ENCODE measurements at regions of chr21 and their contacts with region 1.

Region 1: GRCh38 chr21:43938751-43939442 is 73.2 kb upstream of the TRAPPC10 start:
- DNase-seq: peak; percentile 95
- H3K4me3 Mint-ChIP-seq: peak overlapping the region; percentile 80
- H3K27ac Mint-ChIP-seq: peak overlapping the region; percentile 67
- H3K4me1 Mint-ChIP-seq: peaks cover 15% of the 10 kb centered on the region
- H3K27me3 Mint-ChIP-seq: no peaks in the 10 kb centered on the region

Region 2: GRCh38 chr21:43362321-43362791 is 576.5 kb before region 1 on chr21:
- CTCF ChIA-PET with region 1: no interaction called
- intact Hi-C with region 1: no loop called
- DNase-seq: peak; percentile 81
- H3K4me3 Mint-ChIP-seq: peak overlapping the region; percentile 68
- H3K27ac Mint-ChIP-seq: peak overlapping the region; percentile 27
- H3K4me1 Mint-ChIP-seq: peaks cover 26% of the 10 kb centered on the region
- H3K27me3 Mint-ChIP-seq: no peaks in the 10 kb centered on the region

Region 3: GRCh38 chr21:43659136-43660000 is 279.5 kb before region 1 on chr21 and contains the starts of genes HSF2BP and RRP1B:
- CTCF ChIA-PET with region 1: no interaction called
- intact Hi-C with region 1: no loop called
- DNase-seq: peak; percentile 79
- H3K4me3 Mint-ChIP-seq: peak within 1 kb of the TSS; percentile 98
- H3K27ac Mint-ChIP-seq: peak within 1 kb of the TSS; percentile 96
- H3K4me1 Mint-ChIP-seq: peaks cover 44% of the 10 kb centered on the region
- H3K27me3 Mint-ChIP-seq: no peaks in the 10 kb centered on the region
- total RNA-seq, gene HSF2BP: 1.3 to 2.1 TPM
- total RNA-seq, gene RRP1B: 59.6 to 60.6 TPM

Region 4: DNA sequence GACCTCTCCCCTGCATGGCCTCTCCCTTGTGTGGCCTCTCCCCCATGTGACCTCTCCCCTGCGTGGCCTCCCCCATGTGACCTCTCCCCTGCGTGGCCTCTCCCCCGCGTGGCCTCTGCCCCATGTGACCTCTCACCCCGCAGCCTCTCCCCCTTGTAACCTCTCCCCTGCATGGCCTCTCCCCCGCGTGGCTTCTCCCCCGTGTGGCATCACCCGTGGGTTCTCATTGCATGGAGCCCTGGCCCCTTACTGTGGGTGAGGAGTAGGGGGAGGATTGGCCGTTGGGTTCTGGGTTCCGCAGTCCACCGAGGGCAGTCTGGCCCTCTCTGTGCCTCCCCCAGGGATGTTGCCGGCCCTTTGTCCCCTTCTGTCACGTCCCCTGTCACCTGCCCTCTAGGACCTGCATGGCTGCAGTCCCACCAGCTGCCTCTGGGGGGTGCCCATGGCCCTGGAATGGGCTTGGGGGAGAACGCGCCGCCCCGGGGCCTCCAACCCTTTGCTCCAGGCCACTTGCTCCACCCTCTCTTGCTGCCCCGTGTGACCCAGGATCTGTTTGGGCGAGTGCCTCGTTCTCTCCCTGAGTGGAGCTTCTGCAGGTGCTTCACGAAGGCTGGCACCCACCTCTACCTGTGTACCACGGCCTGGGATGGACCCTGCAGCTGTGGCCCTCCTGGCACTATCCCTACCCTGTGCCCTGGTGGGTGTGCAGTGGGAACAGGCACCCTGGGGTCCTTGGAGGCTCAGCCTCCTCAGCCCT is 128.2 kb before region 1 on chr21:
- CTCF ChIA-PET with region 1: interaction called, 6 read pairs
- intact Hi-C with region 1: loop called (anchors 1 kb)
- DNase-seq: peak; percentile 95
- H3K4me3 Mint-ChIP-seq: no peak overlapping the region
- H3K27ac Mint-ChIP-seq: no peak overlapping the region
- H3K4me1 Mint-ChIP-seq: peaks cover 7% of the 10 kb centered on the region
- H3K27me3 Mint-ChIP-seq: no peaks in the 10 kb centered on the region

Region 5: DNA sequence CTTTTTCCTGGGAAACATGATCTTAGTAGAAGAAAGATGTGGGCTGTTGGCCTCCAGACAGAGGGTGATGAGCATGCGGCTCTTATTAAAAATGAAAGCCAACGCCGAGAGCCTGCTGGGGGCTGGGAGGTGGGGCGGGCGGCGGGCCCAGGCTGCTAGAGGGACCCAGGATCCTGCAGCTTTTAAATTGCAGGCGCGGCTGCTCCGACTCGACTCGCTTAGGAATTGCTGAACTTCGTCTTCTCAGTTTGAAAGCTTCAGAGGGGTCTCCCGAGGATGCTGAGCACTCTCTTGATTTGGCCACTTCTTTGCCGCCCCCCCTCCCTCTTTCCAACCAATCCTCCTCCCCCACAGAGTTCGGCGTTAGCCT is 72.7 kb before region 1 on chr21:
- CTCF ChIA-PET with region 1: interaction called, 6 read pairs
- intact Hi-C with region 1: loop called (anchors 1 kb)
- DNase-seq: peak; percentile 75
- H3K4me3 Mint-ChIP-seq: peak overlapping the region; percentile 75
- H3K27ac Mint-ChIP-seq: peak overlapping the region; percentile 89
- H3K4me1 Mint-ChIP-seq: peaks cover 46% of the 10 kb centered on the region
- H3K27me3 Mint-ChIP-seq: no peaks in the 10 kb centered on the region

Region 6: DNA sequence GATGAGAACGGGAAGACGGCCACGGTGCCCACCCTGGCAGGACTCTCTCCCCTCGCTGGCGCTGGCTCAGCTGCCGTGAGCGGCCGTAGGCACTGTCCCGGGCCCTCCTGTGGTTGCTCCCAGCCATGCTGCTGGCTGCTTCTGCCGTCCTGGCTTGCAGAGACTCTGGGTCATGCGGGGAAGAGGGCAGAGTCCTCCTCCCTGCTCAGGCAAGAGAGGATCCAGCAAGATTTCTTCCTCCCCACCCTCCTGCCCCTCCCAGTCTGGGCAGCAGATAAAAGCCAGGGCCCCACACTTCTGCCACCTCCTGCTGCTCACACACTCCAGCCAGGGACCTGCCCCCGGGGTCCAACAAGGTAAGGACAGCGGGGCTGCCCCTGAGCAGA is 13.8 kb before region 1 on chr21:
- CTCF ChIA-PET with region 1: interaction called, 12 read pairs
- intact Hi-C with region 1: no loop called
- DNase-seq: no peak
- H3K4me3 Mint-ChIP-seq: no peak overlapping the region
- H3K27ac Mint-ChIP-seq: no peak overlapping the region
- H3K4me1 Mint-ChIP-seq: peaks cover 32% of the 10 kb centered on the region
- H3K27me3 Mint-ChIP-seq: no peaks in the 10 kb centered on the region

Region 7: GRCh38 chr21:43948740-43949498 is 10.0 kb after region 1 on chr21:
- CTCF ChIA-PET with region 1: no interaction called
- intact Hi-C with region 1: no loop called
- DNase-seq: no peak
- H3K4me3 Mint-ChIP-seq: no peak overlapping the region
- H3K27ac Mint-ChIP-seq: peak overlapping the region; percentile 57
- H3K4me1 Mint-ChIP-seq: peaks cover 19% of the 10 kb centered on the region
- H3K27me3 Mint-ChIP-seq: no peaks in the 10 kb centered on the region

Region 8: GRCh38 chr21:43975495-43975993 is 36.6 kb after region 1 on chr21:
- CTCF ChIA-PET with region 1: interaction called, 7 read pairs
- intact Hi-C with region 1: loop called (anchors 1 kb)
- DNase-seq: peak; percentile 88
- H3K4me3 Mint-ChIP-seq: no peak overlapping the region
- H3K27ac Mint-ChIP-seq: no peak overlapping the region
- H3K4me1 Mint-ChIP-seq: peaks cover 7% of the 10 kb centered on the region
- H3K27me3 Mint-ChIP-seq: no peaks in the 10 kb centered on the region

Measured in activated naive CD4-positive, alpha-beta T cell treated with anti-CD3 and anti-CD28 coated beads for 36 hours (primary cell).